ENCODE measurements at regions of chr20 and their contacts with region 1.

Region 1: GRCh38 chr20:2451939-2452732 is 18.5 kb downstream of the SNRPB start:
- DNase-seq: peak; percentile 81
- H3K4me3 Mint-ChIP-seq: no peak overlapping the region
- H3K27ac Mint-ChIP-seq: no peak overlapping the region
- H3K4me1 Mint-ChIP-seq: peaks cover 31% of the 10 kb centered on the region
- H3K27me3 Mint-ChIP-seq: no peaks in the 10 kb centered on the region
- CTCF ChIP-seq: peak; percentile 70

Region 2: GRCh38 chr20:1912053-1912452 is 540.1 kb before region 1 on chr20:
- CTCF ChIA-PET with region 1: no interaction called
- POLR2A ChIA-PET with region 1: no interaction called
- intact Hi-C with region 1: no loop called
- DNase-seq: no peak
- H3K4me3 Mint-ChIP-seq: no peak overlapping the region
- H3K27ac Mint-ChIP-seq: no peak overlapping the region
- H3K4me1 Mint-ChIP-seq: peaks cover 13% of the 10 kb centered on the region
- H3K27me3 Mint-ChIP-seq: no peaks in the 10 kb centered on the region
- CTCF ChIP-seq: no peak

Region 3: DNA sequence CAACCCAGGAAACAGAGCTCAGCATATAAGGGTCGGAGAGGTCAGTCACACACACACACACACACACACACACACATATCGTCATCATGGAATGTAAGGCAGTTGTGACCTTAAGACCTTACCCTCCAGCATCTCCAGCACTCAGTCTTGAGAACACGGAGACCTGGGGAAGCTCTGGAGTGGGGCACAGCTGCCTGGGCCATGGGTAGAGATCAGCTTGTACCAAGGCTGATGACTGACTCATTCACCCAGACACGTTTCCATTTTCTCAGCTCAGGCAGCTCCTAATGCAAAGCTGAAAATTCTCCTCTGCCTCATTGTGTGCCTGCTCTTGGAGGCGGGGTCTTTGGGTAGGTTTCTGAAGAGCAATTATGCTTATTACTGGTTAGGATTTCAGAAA is 420.0 kb before region 1 on chr20:
- CTCF ChIA-PET with region 1: no interaction called
- POLR2A ChIA-PET with region 1: no interaction called
- intact Hi-C with region 1: no loop called
- DNase-seq: no peak
- H3K4me3 Mint-ChIP-seq: no peak overlapping the region
- H3K27ac Mint-ChIP-seq: no peak overlapping the region
- H3K4me1 Mint-ChIP-seq: no peaks in the 10 kb centered on the region
- H3K27me3 Mint-ChIP-seq: peaks cover 88% of the 10 kb centered on the region
- CTCF ChIP-seq: no peak

Region 4: DNA sequence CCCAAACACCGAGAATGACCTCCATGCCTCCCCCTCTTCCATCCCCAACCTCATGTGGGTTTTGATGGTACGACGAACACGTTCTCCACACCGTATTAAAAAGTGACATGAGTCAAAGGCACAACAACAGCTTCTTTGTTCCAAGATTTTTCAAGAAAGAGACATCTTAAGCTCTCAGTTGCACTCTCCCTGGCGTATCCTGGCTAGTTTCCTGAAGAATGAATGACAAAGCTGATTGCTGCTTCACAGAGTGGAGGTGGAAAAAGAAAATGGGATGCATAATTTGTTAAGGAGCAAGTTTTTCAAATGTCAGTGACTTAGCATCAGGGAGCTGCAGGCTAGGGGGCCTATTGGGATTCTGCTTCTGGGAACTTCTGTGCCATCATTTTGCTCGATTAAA is 255.0 kb before region 1 on chr20:
- CTCF ChIA-PET with region 1: interaction called, 12 read pairs
- POLR2A ChIA-PET with region 1: no interaction called
- intact Hi-C with region 1: no loop called
- DNase-seq: no peak
- H3K4me3 Mint-ChIP-seq: no peak overlapping the region
- H3K27ac Mint-ChIP-seq: no peak overlapping the region
- H3K4me1 Mint-ChIP-seq: peaks cover 7% of the 10 kb centered on the region
- H3K27me3 Mint-ChIP-seq: peaks cover 34% of the 10 kb centered on the region
- CTCF ChIP-seq: no peak

Region 5: GRCh38 chr20:2349818-2350508 is 102.2 kb before region 1 on chr20:
- CTCF ChIA-PET with region 1: no interaction called
- POLR2A ChIA-PET with region 1: no interaction called
- intact Hi-C with region 1: loop called (anchors 1 kb)
- DNase-seq: no peak
- H3K4me3 Mint-ChIP-seq: no peak overlapping the region
- H3K27ac Mint-ChIP-seq: no peak overlapping the region
- H3K4me1 Mint-ChIP-seq: no peaks in the 10 kb centered on the region
- H3K27me3 Mint-ChIP-seq: no peaks in the 10 kb centered on the region
- CTCF ChIP-seq: no peak

Region 6: GRCh38 chr20:2387180-2387577 is 65.0 kb before region 1 on chr20:
- CTCF ChIA-PET with region 1: interaction called, 17 read pairs
- POLR2A ChIA-PET with region 1: interaction called, 9 read pairs
- intact Hi-C with region 1: no loop called
- DNase-seq: peak; percentile 56
- H3K4me3 Mint-ChIP-seq: no peak overlapping the region
- H3K27ac Mint-ChIP-seq: no peak overlapping the region
- H3K4me1 Mint-ChIP-seq: peaks cover 14% of the 10 kb centered on the region
- H3K27me3 Mint-ChIP-seq: no peaks in the 10 kb centered on the region
- CTCF ChIP-seq: peak; percentile 31

Region 7: GRCh38 chr20:2421247-2421646 is 30.9 kb before region 1 on chr20:
- CTCF ChIA-PET with region 1: interaction called, 55 read pairs
- POLR2A ChIA-PET with region 1: interaction called, 15 read pairs
- intact Hi-C with region 1: loop called (anchors 1 kb)
- DNase-seq: peak; percentile 24
- H3K4me3 Mint-ChIP-seq: no peak overlapping the region
- H3K27ac Mint-ChIP-seq: no peak overlapping the region
- H3K4me1 Mint-ChIP-seq: no peaks in the 10 kb centered on the region
- H3K27me3 Mint-ChIP-seq: no peaks in the 10 kb centered on the region
- CTCF ChIP-seq: peak; percentile 27

Region 8: DNA sequence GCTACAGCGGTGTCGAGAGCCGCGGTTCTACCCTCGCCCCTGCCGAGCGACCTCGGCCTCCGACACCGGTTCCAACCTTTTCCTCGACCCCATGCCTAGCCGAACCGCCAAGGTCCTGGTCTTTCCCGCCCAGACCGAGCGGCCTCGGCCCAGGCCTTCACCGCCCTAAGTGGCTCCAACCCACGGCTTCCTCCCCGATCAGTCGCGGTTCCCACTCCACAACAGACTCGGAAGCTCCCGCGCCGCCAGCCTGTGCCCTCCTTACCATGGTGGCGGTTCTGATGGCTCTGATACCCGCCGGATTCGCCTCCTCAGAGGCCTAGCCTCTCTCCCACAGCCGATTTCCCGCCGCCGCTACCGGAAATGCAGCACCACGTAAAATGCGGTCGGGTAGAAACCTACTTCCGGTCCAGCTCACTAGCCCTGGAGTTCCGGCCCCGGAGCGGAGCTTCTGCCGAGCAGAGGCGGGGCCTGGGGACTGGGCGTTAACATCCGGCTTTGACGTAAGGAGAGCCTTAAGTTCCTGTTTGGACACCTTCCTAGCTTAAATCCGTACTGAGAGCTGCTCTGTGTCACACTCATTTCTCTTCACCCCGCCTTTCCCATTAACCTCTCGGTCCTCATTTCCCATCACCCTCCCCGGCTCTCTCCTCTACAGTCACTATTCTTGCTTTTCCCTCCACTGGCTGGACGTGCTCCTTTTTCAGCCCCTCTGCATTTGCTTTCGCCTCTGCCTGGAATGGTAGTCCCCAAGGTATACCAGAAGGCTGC is 18.5 kb after region 1 on chr20 and contains the start of gene SNRPB:
- CTCF ChIA-PET with region 1: interaction called, 62 read pairs
- POLR2A ChIA-PET with region 1: interaction called, 11 read pairs
- intact Hi-C with region 1: no loop called
- DNase-seq: peak; percentile 98
- H3K4me3 Mint-ChIP-seq: peak within 1 kb of the TSS; percentile 96
- H3K27ac Mint-ChIP-seq: peak within 1 kb of the TSS; percentile 100
- H3K4me1 Mint-ChIP-seq: peaks cover 55% of the 10 kb centered on the region
- H3K27me3 Mint-ChIP-seq: no peaks in the 10 kb centered on the region
- CTCF ChIP-seq: no peak
- total RNA-seq, gene SNRPB: 236 and 240 TPM in 2 replicates